Ovary (tissue), 10 donors: ENCODE measurements at regions of chr13 and their contacts with region 1.

Region 1: GRCh38 chr13:20990910-20991525 is 70.4 kb downstream of the LATS2 start:
- DNase-seq: no peak
- H3K4me3 ChIP-seq: no peak overlapping the region
- H3K27ac ChIP-seq: no peak overlapping the region
- H3K4me1 ChIP-seq: no peaks in the 10 kb centered on the region
- H3K27me3 ChIP-seq: no peaks in the 10 kb centered on the region
- CTCF ChIP-seq: no peak
- EP300 ChIP-seq: no peak
- POLR2A ChIP-seq: no peak

Region 2: GRCh38 chr13:21176220-21176982 is 185.4 kb after region 1 on chr13 and contains the starts of genes MRPL57 and SKA3:
- intact Hi-C with region 1: loop called in 1 of 4 experiments (anchors 1 kb)
- DNase-seq: peak; percentile 90 to 95 (median 93)
- H3K4me3 ChIP-seq: peak within 1 kb of the TSS; percentile 92
- H3K27ac ChIP-seq: peak within 1 kb of the TSS; percentile 86 to 93
- H3K4me1 ChIP-seq: peaks cover 2% of the 10 kb centered on the region
- H3K27me3 ChIP-seq: no peaks in the 10 kb centered on the region
- CTCF ChIP-seq: peak in 2 of 3 donors; percentile 39 to 60
- EP300 ChIP-seq: no peak
- POLR2A ChIP-seq: peak; percentile 89
- total RNA-seq, gene MRPL57: 16.1 to 39.3 (median 19.7) TPM
- total RNA-seq, gene SKA3: 0.12 to 1.2 (median 0.43) TPM